ENCODE measurements at regions of chr11 and their contacts with region 1.

Region 1: DNA sequence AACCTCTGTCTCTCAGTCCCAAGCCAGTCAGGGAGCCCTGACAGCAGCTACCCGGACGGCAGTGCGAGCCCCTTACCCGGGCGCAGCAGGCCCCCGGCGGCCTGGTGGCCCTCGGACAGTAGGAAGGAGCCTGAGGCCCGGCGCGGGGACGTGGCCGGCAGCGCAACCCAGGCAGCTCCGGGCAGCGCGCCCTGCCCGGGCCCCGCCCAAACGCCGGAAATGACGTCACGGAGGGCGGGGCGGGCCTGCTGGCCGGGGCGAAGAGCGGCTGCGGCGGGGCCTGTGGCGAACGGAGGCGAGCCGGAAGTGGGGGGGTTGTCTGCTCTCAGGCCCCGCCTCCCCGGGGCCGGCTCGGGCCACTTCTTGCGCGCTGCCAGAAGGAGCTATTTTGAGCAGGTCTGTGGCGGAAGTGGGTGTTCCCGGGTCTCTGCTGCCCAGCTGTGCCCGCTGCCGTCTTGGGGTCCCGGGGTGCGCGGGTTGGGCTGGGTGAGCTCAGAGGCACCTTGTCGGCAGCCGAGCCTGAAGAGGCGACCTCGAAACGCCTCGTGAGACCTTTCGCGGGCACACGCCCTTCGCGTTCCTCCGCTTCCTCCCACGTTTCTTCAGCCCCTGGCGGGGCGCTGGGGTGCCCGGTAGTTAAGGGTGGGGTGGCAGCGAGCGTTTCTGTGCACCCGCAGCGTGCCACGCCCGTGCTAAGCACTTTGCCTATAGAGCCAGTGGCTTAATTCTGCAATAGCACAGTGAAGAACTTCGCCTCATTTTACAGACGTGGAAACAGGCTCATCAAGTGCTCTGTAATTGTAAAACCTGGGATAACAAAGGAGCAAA is at the start of gene C11orf24:
- DNase-seq: peak; percentile 99
- ATAC-seq: peak; percentile 92
- H3K4me3 Mint-ChIP-seq: peak within 1 kb of the TSS; percentile 98
- H3K27ac Mint-ChIP-seq: peak within 1 kb of the TSS; percentile 99
- H3K4me1 Mint-ChIP-seq: peaks cover 30% of the 10 kb centered on the region
- H3K27me3 Mint-ChIP-seq: no peaks in the 10 kb centered on the region
- total RNA-seq, gene C11orf24: 23.1 to 23.5 TPM

Region 2: GRCh38 chr11:68090706-68091105 is 181.3 kb before region 1 on chr11:
- POLR2A ChIA-PET with region 1: no interaction called
- DNase-seq: no peak
- ATAC-seq: peak; percentile 99
- H3K4me3 Mint-ChIP-seq: peak overlapping the region; percentile 54
- H3K27ac Mint-ChIP-seq: peak overlapping the region; percentile 71
- H3K4me1 Mint-ChIP-seq: peaks cover 10% of the 10 kb centered on the region
- H3K27me3 Mint-ChIP-seq: no peaks in the 10 kb centered on the region

Region 3: DNA sequence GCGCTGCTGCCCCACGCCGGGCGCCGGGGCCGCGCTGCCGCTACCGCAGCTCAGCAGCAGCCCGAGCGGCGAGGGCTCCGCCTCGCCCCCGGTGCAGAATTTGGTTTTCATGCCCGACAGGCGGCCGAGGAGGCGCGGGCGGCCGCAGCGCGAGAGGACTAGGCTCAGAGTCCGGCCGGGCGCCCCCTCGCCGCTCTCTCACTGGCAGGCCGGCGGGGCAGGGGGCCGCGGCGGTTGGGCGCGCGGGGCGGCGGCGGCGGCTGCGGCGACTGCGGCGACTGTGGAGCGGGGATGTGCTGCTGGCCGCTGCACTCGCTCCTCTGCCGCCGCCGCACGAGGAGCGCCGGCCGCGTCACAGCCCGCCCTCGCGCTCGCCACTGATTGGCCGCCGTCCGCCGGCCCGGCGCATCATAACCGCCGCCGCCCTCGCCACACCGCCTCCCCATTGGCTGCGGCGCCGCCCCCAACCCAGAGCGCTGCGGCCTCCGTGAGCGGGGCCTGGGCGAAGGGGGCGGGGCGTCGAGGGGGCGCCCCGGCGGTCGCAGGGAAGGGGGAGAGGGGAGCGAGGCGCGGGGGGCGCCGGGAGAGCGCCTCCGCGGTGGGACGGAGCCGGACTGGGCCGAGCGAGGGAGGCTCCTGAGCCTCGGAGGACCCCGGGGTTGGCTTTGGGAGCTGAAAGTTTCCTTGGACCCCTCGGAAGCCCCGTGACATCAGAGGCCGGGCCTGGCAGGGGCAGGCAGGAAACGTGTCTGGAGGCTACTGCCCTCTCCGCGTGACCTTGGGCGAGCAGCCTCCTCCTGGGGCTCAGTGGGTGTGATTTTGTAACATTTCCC is 150.7 kb before region 1 on chr11 and contains the start of gene CHKA:
- POLR2A ChIA-PET with region 1: no interaction called
- DNase-seq: peak; percentile 92
- ATAC-seq: peak; percentile 84
- H3K4me3 Mint-ChIP-seq: peak within 1 kb of the TSS; percentile 85
- H3K27ac Mint-ChIP-seq: peak within 1 kb of the TSS; percentile 91
- H3K4me1 Mint-ChIP-seq: peaks cover 20% of the 10 kb centered on the region
- H3K27me3 Mint-ChIP-seq: peaks cover 9% of the 10 kb centered on the region
- total RNA-seq, gene CHKA: 8.1 to 9.2 TPM

Region 4: DNA sequence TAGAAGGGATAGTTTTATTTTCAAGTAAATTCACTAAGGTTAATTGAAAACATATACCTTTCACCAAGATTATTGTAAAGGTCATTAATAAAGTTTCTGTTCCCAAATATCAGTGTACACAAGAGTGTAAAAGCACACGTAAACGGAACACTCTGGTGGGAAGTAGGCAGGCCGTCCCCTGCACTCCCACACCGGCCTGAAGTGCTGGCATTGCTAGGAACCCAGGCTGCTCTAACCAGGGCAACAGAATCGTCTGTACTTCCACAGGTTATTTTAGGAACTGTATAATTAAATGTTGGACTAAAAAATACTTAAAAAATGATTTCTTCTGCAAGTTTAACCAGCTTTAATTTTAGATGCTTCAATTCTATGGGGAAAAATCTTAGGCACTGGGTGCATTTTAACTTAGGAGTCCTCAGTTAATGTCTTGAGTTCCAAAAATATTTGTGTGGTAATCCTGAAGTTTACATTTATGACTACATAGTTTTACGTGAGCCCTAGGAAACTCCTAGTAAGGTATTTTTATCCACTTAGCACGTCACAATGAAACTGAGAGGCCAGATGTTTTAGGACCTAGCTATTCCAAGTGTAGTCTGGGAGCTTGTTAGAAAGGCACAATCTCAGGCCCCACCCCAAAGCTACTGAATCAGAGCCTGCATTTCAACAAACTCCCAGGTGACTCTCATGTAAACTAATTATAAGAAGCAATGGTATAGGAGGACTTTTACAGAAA is 90.1 kb before region 1 on chr11:
- POLR2A ChIA-PET with region 1: no interaction called
- DNase-seq: no peak
- ATAC-seq: no peak
- H3K4me3 Mint-ChIP-seq: no peak overlapping the region
- H3K27ac Mint-ChIP-seq: no peak overlapping the region
- H3K4me1 Mint-ChIP-seq: peaks cover 2% of the 10 kb centered on the region
- H3K27me3 Mint-ChIP-seq: no peaks in the 10 kb centered on the region

Region 5: GRCh38 chr11:68223275-68223674 is 48.7 kb before region 1 on chr11:
- POLR2A ChIA-PET with region 1: no interaction called
- DNase-seq: no peak
- ATAC-seq: no peak
- H3K4me3 Mint-ChIP-seq: no peak overlapping the region
- H3K27ac Mint-ChIP-seq: no peak overlapping the region
- H3K4me1 Mint-ChIP-seq: peaks cover 3% of the 10 kb centered on the region
- H3K27me3 Mint-ChIP-seq: peaks cover 4% of the 10 kb centered on the region

Region 6: DNA sequence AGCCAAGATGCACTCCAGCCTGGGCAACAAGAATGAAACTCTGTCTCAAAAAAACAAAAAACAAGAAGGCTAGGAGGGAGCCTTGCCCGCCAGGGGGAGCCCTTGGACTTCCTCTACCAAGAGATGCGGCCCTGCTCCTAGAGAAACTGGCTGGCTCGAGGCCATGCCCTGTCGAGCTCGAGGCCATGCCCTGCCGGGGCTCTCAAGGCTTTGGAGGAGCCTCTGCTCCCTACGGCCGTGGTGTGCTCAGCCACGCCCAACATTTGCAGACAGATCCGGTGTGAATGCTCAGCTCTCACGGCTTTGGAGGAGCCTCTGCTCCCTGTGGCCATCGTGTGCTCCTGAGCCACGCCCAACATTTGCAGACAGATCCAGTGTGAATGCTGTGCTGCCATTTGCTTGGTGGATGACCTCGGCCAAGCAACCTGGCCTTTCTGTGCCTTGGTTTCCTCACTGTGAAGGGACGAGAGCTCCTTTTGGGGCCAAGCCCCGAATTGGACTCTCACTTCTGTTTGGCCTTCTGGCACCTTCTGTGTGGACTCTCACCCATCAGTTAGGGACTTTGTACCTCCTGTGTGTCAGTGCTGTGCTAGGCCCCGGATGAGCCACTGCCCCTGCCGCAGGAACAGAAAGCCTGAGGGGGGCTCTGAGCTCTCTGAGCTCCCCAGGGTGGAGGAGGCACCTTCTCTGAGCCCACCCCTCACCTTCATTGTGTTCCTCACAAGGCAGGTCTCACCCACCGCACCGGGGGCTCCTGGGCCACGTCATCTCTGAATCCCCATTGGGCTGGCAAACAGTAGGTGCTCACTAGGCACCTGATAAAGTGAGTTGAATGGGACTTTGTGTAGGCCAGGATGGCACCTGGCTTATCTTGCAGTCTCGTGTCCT is 14.3 kb before region 1 on chr11:
- POLR2A ChIA-PET with region 1: interaction called, 10 read pairs
- DNase-seq: peak; percentile 94
- ATAC-seq: peak; percentile 95
- H3K4me3 Mint-ChIP-seq: no peak overlapping the region
- H3K27ac Mint-ChIP-seq: peak overlapping the region; percentile 77
- H3K4me1 Mint-ChIP-seq: peaks cover 6% of the 10 kb centered on the region
- H3K27me3 Mint-ChIP-seq: no peaks in the 10 kb centered on the region

Region 7: DNA sequence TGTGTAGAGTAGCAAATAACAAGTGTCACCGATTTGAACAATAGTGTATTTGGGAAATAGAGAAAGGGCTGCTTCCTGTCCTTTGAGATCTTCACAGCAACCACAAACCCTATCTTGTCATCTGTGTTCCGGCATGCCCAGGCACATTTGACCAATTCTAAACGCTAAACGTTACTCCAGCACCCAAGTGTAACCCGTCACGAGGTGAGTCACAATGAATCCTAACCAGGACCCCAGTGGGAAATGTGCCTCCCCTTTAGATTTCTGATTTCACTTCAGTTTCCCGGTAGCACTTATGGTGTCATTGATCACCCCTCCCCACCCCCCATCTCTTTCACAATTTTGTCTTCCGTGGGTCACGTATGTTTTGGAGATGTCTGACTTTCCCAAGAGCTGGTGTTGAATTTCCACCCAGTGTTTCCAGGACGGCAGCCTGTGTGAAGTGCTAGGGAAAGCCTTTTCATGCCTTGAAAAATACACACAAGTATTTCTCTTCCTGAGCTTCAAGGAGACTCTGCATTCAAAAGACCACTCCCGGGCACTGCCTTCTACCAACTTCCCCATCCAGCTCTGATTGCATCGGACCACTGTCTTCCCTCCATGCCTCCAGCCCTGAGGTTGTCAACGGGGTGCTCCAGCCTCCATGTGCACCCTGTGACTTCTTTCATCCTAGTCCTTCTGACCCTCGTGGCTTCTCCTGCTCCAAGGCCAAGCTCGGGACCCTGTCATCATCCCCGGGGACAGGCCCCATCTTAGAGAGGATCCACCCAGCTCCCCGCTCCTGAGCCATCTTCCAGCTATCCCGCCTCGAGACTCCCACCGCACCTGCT is 10.4 kb after region 1 on chr11:
- POLR2A ChIA-PET with region 1: interaction called, 16 read pairs
- DNase-seq: peak; percentile 49
- ATAC-seq: peak; percentile 89
- H3K4me3 Mint-ChIP-seq: peak overlapping the region; percentile 78
- H3K27ac Mint-ChIP-seq: peak overlapping the region; percentile 91
- H3K4me1 Mint-ChIP-seq: peaks cover 29% of the 10 kb centered on the region
- H3K27me3 Mint-ChIP-seq: peaks cover 3% of the 10 kb centered on the region

Measured in activated naive CD8-positive, alpha-beta T cell treated with anti-CD3 and anti-CD28 coated beads, Interleukin-2, amount 10 ng/mL, durations not matched to agents 7 days and 5 days (primary cell).